SK-N-SH (cell line): ENCODE measurements at regions of chr12 and their contacts with region 1.

Region 1: GRCh38 chr12:85424581-85425348 is 144.7 kb downstream of the ALX1 start:
- DNase-seq: peak; percentile 19
- H3K4me3 ChIP-seq: peak overlapping the region in 1 of 2 experiments; percentile 10; a peak in 1 of 4 replicates
- H3K27ac ChIP-seq: no peak overlapping the region; a peak in 1 of 4 replicates
- H3K4me1 ChIP-seq: peaks cover 2 to 6% of the 10 kb centered on the region in 2 experiments; a peak in 3 of 4 replicates
- H3K27me3 ChIP-seq: no peaks in the 10 kb centered on the region
- CTCF ChIP-seq: peak; percentile 89
- EP300 ChIP-seq: no peak
- RAD21 ChIP-seq: peak; percentile 70

Region 2: GRCh38 chr12:85076688-85077430 is 347.9 kb before region 1 on chr12:
- CTCF ChIA-PET with region 1: interaction called, 15 read pairs
- POLR2A ChIA-PET with region 1: no interaction called
- DNase-seq: peak; percentile 12
- H3K4me3 ChIP-seq: peak overlapping the region in 1 of 2 experiments; percentile 6; a peak in 1 of 4 replicates
- H3K27ac ChIP-seq: no peak overlapping the region
- H3K4me1 ChIP-seq: peaks cover 0 to 4% of the 10 kb centered on the region in 2 experiments; a peak in 2 of 4 replicates
- H3K27me3 ChIP-seq: no peaks in the 10 kb centered on the region
- CTCF ChIP-seq: peak; percentile 75
- EP300 ChIP-seq: no peak
- RAD21 ChIP-seq: peak; percentile 81

Region 3: DNA sequence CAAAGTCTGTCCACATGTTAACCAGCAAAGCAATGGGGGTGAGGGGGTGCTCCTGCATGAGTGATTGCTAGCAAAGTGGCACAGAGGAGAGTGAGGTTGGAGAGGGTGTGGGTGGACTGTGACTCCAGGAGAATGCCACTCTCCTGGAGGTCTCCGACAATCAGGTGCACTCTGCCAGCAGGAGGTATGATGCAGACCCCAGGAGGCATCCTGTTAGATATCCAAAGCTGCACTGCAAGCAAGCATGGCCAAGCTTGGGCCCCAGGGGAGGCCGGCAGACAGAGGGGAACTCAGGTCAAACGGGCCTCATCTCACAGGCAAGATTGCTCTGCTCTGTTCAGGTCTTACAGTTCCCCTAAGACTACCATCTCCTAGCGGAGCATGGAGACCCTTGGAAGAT is 218.2 kb before region 1 on chr12:
- CTCF ChIA-PET with region 1: no interaction called
- POLR2A ChIA-PET with region 1: no interaction called
- DNase-seq: no peak
- H3K4me3 ChIP-seq: no peak overlapping the region
- H3K27ac ChIP-seq: no peak overlapping the region
- H3K4me1 ChIP-seq: no peaks in the 10 kb centered on the region
- H3K27me3 ChIP-seq: no peaks in the 10 kb centered on the region
- CTCF ChIP-seq: no peak
- EP300 ChIP-seq: no peak
- RAD21 ChIP-seq: no peak

Region 4: DNA sequence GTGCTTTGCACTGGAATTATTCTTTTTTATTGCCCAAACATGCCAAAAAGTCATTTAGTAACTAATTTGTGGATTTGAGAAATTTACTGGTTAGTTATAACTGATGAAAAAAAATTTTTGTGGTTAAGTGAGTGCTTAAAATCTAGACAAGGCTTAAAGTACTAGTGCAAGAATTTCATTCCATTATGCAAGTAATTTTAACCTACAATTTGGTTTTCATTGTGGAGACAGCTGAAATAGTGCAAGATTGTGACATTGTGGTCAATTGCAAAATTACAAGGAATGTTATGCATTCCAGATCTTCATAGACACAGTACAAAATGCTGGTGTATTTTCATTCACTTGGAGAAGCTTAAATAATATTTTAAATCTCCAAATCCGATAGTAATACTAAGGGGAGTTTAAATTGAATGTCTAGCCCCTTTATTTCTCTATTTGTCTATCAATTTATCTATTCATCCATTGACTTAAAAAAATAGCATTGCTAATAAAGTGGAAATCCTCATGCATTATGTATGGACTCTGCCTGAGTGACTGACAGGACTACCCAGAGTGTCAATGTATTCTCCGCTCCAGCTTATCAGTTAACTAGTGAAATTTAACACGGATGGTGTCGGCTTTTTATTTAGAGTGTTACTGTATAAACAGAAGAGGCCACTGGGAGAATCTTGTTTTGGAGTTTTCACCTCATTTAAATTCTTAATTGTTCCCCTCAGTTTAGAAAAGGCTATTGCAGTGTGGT is 18.8 kb before region 1 on chr12:
- CTCF ChIA-PET with region 1: interaction called, 12 read pairs
- POLR2A ChIA-PET with region 1: no interaction called
- DNase-seq: no peak
- H3K4me3 ChIP-seq: no peak overlapping the region
- H3K27ac ChIP-seq: no peak overlapping the region
- H3K4me1 ChIP-seq: 0 out of 4 replicates have a peak, but pooled peaks cover 0 to 6% of the 10 kb centered on the region in 2 experiments
- H3K27me3 ChIP-seq: no peaks in the 10 kb centered on the region
- CTCF ChIP-seq: no peak
- EP300 ChIP-seq: no peak
- RAD21 ChIP-seq: no peak

Region 5: GRCh38 chr12:85441740-85442139 is 17.0 kb after region 1 on chr12:
- CTCF ChIA-PET with region 1: interaction called, 21 read pairs
- POLR2A ChIA-PET with region 1: no interaction called
- DNase-seq: peak; percentile 14
- H3K4me3 ChIP-seq: no peak overlapping the region
- H3K27ac ChIP-seq: no peak overlapping the region
- H3K4me1 ChIP-seq: no peaks in the 10 kb centered on the region; a peak in 1 of 4 replicates
- H3K27me3 ChIP-seq: no peaks in the 10 kb centered on the region
- CTCF ChIP-seq: peak; percentile 49
- EP300 ChIP-seq: no peak
- RAD21 ChIP-seq: peak; percentile 65

Region 6: GRCh38 chr12:85448548-85449139 is 23.9 kb after region 1 on chr12:
- CTCF ChIA-PET with region 1: interaction called, 29 read pairs
- POLR2A ChIA-PET with region 1: no interaction called
- DNase-seq: peak; percentile 11
- H3K4me3 ChIP-seq: no peak overlapping the region
- H3K27ac ChIP-seq: no peak overlapping the region
- H3K4me1 ChIP-seq: no peaks in the 10 kb centered on the region; a peak in 1 of 4 replicates
- H3K27me3 ChIP-seq: no peaks in the 10 kb centered on the region
- CTCF ChIP-seq: peak; percentile 61
- EP300 ChIP-seq: no peak
- RAD21 ChIP-seq: peak; percentile 75